Activated naive CD4-positive, alpha-beta T cell treated with anti-CD3 and anti-CD28 coated beads for 36 hours (primary cell): ENCODE measurements at regions of chr13 and their contacts with region 1.

Region 1: DNA sequence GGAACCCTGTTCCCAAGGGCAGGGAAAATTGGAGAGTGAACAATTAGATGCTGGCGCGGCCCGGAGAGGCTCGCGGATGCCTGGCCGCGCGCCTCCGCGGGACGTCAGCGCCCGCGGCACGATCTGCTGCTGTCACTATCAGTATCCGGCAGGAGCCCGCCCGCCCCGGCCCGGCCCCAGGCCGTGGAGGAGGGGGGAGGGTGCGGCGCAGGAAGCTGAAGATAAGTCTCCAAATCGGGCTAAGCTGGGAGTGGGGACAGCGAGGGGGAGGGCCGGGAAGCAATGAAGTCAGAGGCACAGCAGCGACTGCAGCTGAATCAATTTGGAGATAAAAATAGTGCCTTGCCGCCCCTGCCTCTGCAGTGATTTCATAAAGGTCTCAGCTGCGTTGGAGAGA is 441.5 kb upstream of the KLF12 start:
- DNase-seq: peak; percentile 77
- H3K4me3 Mint-ChIP-seq: peak overlapping the region; percentile 69
- H3K27ac Mint-ChIP-seq: no peak overlapping the region
- H3K4me1 Mint-ChIP-seq: peaks cover 10% of the 10 kb centered on the region
- H3K27me3 Mint-ChIP-seq: peaks cover 20% of the 10 kb centered on the region

Region 2: DNA sequence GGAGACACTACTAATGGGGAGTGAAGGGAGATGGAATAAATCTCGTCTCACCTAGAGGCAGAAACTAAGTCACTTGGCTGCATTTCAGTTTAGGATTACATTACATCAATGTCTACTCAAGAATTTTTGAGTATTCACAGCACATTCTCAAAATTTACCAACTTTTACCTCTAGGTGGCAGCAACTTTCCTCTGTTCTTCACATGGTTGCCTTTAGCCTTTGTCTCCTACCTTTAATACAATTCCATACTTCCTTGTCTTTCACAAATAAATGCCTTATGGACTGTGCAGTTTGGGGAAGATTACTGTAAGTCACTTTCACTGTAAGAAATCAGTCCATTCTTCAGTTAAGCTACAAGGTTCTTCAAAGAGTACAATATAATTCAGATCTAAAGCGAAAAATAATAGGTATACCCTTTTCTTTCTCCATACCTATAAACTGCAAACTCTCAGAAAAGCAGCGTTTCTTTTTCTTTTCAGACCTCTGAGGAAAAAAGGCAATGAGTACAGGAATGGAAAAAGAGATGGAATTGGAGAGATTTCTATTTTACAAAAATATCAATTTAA is 820.9 kb before region 1 on chr13:
- CTCF ChIA-PET with region 1: no interaction called
- intact Hi-C with region 1: loop called (anchors 10 kb)
- DNase-seq: peak; percentile 20
- H3K4me3 Mint-ChIP-seq: no peak overlapping the region
- H3K27ac Mint-ChIP-seq: no peak overlapping the region
- H3K4me1 Mint-ChIP-seq: peaks cover 33% of the 10 kb centered on the region
- H3K27me3 Mint-ChIP-seq: no peaks in the 10 kb centered on the region

Region 3: DNA sequence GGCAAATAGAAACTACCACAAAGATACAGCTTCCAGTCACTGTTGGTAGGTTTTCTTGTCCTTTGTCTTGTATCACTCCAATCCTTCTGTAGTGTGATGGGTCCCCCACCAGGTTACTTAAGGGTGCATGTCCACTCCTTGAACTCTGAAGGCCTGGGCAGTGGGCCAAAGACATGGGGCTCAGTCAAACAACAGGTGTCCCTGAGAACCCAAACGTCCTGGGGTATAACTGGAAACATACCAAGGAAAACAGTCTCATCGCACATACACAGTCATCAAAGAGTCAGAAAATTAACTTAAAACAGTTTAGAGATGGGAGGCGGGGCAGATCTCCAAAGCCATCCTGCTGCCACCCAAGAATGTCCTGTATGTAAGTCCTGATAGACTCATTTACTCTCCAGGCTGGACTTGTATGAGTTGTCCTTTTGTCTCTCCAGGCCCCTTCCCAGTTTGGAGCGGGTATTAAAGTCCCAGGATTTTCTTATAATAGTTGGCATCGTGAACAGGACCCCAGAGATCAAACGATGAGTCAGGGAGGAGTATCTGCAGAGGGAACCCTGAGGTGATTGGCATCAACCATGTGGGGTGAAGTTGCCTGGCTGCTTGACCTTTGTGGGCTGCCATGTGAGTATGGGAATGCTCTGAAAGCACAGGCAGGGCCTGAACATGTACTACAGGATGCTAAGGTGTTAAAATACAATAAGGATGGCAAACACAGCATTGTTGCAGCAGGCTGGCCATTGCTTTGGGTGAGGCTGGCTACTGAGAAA is 171.6 kb after region 1 on chr13:
- CTCF ChIA-PET with region 1: no interaction called
- intact Hi-C with region 1: no loop called
- DNase-seq: no peak
- H3K4me3 Mint-ChIP-seq: no peak overlapping the region
- H3K27ac Mint-ChIP-seq: no peak overlapping the region
- H3K4me1 Mint-ChIP-seq: no peaks in the 10 kb centered on the region
- H3K27me3 Mint-ChIP-seq: no peaks in the 10 kb centered on the region